A549 (cell line): ENCODE measurements at regions of chr11 and their contacts with region 1.

Region 1: DNA sequence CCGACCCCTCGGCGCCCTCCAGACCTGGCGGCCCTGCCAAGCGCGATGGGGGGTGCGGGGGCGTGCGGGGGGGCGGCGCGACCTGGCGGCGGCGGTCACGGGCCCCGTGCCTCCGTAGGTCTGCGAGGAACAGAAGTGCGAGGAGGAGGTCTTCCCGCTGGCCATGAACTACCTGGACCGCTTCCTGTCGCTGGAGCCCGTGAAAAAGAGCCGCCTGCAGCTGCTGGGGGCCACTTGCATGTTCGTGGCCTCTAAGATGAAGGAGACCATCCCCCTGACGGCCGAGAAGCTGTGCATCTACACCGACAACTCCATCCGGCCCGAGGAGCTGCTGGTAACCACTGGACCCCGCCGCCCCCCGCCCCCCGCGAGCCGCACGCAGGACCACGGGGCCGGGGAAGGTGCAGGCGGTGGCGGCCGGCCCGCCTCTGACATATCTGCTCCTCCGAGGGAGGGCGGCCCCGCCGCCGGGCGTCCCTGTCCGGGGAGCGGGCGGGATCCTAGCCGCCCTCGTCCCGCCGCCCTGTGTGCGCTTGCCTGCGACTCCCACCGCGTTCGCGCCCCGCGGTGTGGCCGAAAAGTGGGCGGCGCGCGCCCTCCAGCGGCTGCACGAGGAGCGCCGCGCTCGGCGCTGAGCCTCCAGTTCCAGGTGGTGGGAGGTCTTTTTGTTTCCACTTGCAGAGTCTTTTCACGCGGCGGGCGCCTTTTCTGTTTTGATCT is 2.1 kb downstream of the CCND1 start:
- DNase-seq: peak; percentile 55 to 80
- ATAC-seq: peak; percentile 13 to 41; a peak in 4 of 6 replicates
- H3K4me3 ChIP-seq: peak overlapping the region; percentile 91
- H3K27ac ChIP-seq: peak overlapping the region; percentile 95 to 96
- H3K4me1 ChIP-seq: peaks cover 45% of the 10 kb centered on the region
- CTCF ChIP-seq: peak; percentile 90
- EP300 ChIP-seq: no peak
- POLR2A ChIP-seq: no peak
- RAD21 ChIP-seq: peak; percentile 74 to 97

Region 2: GRCh38 chr11:69088676-69089146 is 554.4 kb before region 1 on chr11:
- CTCF ChIA-PET with region 1: interaction called, 16 read pairs
- POLR2A ChIA-PET with region 1: no interaction called
- DNase-seq: peak; percentile 83 to 97
- ATAC-seq: peak; percentile 76 to 92
- H3K4me3 ChIP-seq: no peak overlapping the region
- H3K27ac ChIP-seq: no peak overlapping the region
- H3K4me1 ChIP-seq: peaks cover 7% of the 10 kb centered on the region; the same call in 2 of the 3 replicates
- CTCF ChIP-seq: peak; percentile 87
- EP300 ChIP-seq: no peak
- POLR2A ChIP-seq: no peak
- RAD21 ChIP-seq: peak; percentile 90 to 95

Region 3: DNA sequence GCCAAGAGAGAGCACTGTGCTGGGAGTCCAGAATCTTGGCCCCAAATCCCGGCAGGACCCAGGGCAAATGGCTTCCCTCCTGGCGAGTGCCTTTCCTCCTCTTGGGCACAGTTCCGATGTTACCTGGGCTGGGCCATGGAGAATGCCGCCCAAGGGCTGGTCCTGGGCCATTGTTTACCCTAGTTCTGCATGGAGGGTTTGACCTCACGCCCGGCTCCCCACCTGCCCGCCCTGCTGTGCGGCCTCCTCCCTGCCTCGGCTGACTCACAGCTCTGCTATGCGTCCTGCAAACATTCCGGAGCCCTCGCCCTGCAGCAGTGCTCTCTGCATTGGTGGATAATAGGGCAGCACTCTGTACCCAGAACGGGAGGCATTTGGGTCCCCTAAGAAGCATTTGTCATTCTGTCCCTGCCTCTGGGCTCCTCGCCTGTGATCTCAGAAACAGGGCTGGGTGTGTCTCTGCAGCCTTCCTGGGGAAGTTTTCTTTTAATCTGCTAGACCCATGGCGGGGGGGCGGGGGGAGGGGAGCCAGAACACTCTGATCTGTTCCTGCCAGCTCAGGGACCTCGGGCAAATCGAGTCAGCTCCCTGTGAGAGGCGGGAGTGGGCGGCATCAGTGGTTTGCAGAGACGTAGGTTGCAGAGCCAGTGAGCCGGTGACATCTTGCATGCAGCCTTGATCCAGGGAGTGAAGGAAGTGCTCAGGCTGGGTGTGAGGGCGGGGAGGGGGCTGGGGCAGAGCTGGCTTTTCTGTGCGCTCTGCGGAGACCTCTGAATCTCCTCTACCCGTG is 520.2 kb before region 1 on chr11:
- CTCF ChIA-PET with region 1: interaction called, 38 read pairs
- POLR2A ChIA-PET with region 1: interaction called, 7 read pairs
- DNase-seq: peak; percentile 97 to 99
- ATAC-seq: peak; percentile 90 to 96
- H3K4me3 ChIP-seq: peak overlapping the region; percentile 28; the same call in 1 of the 3 replicates
- H3K27ac ChIP-seq: peak overlapping the region; percentile 91 to 98
- H3K4me1 ChIP-seq: peaks cover 37% of the 10 kb centered on the region
- CTCF ChIP-seq: no peak
- EP300 ChIP-seq: peak; percentile 86 to 91; a peak in 4 of 5 replicates
- POLR2A ChIP-seq: peak; percentile 18; the same call in 1 of the 2 replicates
- RAD21 ChIP-seq: peak; percentile 45 to 55; a peak in 4 of 5 replicates

Region 4: DNA sequence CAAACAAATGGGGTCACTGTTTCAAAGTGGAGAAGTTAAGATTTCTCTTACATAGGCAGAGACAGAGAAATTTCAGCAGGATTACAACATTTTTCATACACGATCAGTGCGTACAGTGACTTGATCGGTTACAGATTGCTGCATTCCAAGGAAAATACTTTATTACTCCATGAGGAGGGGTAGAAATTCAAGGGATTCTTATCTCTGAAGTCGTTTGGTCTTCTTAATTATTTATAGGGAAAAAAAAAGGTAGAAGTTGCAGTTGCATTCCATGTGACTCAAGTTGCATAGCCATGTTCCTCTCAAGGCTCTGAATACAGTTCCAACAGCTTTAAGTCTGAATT is 498.0 kb before region 1 on chr11:
- CTCF ChIA-PET with region 1: interaction called, 11 read pairs
- POLR2A ChIA-PET with region 1: no interaction called
- DNase-seq: no peak
- ATAC-seq: no peak
- H3K4me3 ChIP-seq: no peak overlapping the region
- H3K27ac ChIP-seq: no peak overlapping the region
- H3K4me1 ChIP-seq: no peaks in the 10 kb centered on the region
- CTCF ChIP-seq: no peak
- EP300 ChIP-seq: no peak
- POLR2A ChIP-seq: no peak
- RAD21 ChIP-seq: no peak

Region 5: GRCh38 chr11:69296890-69297786 is 345.9 kb before region 1 on chr11:
- CTCF ChIA-PET with region 1: interaction called, 150 read pairs
- POLR2A ChIA-PET with region 1: interaction called, 188 read pairs
- DNase-seq: peak; percentile 93 to 97
- ATAC-seq: peak; percentile 15 to 34
- H3K4me3 ChIP-seq: peak overlapping the region; percentile 69
- H3K27ac ChIP-seq: peak overlapping the region; percentile 93 to 98
- H3K4me1 ChIP-seq: peaks cover 75% of the 10 kb centered on the region
- CTCF ChIP-seq: no peak
- EP300 ChIP-seq: peak; percentile 87 to 95; a peak in 4 of 5 replicates
- POLR2A ChIP-seq: no peak
- RAD21 ChIP-seq: peak; percentile 1 to 66; a peak in 3 of 5 replicates

Region 6: DNA sequence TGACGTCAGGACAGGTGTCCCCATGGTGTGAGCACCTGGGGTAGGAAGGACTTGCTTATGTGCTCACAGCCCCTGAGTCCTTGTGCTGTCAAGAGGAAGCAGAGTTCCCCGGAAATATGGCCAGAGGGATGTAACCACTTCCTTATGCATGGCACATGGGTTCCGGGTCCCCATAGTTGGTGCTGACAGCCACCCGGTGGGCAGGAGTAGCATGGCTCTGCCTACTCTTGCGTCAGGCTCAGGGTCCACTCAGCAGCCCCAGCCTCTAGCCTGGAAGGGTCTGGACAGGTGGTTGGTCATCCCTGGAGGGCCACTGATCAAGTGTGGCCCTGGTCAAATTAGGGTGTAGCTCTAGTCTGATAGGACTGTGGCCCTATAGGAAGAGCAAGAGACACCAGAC is 44.9 kb before region 1 on chr11:
- CTCF ChIA-PET with region 1: interaction called, 11 read pairs
- POLR2A ChIA-PET with region 1: no interaction called
- DNase-seq: peak in 1 of 2 experiments; percentile 47
- ATAC-seq: peak in 1 of 2 experiments; percentile 70; a peak in 4 of 6 replicates
- H3K4me3 ChIP-seq: no peak overlapping the region
- H3K27ac ChIP-seq: no peak overlapping the region
- H3K4me1 ChIP-seq: no peaks in the 10 kb centered on the region
- CTCF ChIP-seq: peak; percentile 18; the same call in 1 of the 3 replicates
- EP300 ChIP-seq: no peak
- POLR2A ChIP-seq: no peak
- RAD21 ChIP-seq: peak; percentile 44 to 50

Region 7: DNA sequence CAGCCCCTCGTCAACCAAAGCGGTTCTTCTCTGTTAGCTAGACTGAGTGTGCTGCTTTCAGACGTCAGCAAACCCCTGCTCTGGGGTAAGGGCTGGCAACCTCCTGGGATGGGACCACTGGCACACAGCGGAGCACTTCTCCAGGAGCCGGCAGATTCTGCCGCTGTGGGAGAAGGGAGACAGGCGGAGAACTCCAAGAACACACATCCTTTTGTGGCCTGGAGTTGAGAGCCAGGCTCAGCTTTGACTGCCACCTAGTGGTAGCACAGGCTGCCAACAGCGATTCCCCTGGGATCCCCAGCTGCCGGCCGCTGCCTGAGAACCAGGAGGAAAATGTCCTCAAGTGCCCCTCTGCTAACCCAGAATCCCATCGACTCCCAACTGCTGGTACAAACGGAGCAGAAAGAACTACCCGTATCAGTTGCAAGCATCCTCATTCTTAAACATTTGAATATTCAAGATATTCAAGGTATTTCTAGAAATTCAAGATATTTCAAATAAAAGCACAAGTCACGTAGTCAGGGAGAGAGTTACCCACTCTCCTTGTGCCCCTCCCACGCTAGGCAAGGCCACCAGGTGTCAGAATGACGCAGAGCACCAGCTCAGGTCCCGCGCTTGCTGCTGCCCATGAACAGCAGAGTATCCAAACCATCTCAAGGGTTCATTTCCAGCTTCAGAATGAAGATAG is 27.2 kb after region 1 on chr11:
- CTCF ChIA-PET with region 1: interaction called, 102 read pairs
- POLR2A ChIA-PET with region 1: interaction called, 4 read pairs
- DNase-seq: peak; percentile 87 to 90
- ATAC-seq: peak; percentile 80 to 81
- H3K4me3 ChIP-seq: no peak overlapping the region
- H3K27ac ChIP-seq: peak overlapping the region; percentile 49 to 72; a peak in 4 of 6 replicates
- H3K4me1 ChIP-seq: peaks cover 24% of the 10 kb centered on the region
- CTCF ChIP-seq: peak; percentile 93
- EP300 ChIP-seq: no peak
- POLR2A ChIP-seq: no peak
- RAD21 ChIP-seq: peak; percentile 92

Region 8: DNA sequence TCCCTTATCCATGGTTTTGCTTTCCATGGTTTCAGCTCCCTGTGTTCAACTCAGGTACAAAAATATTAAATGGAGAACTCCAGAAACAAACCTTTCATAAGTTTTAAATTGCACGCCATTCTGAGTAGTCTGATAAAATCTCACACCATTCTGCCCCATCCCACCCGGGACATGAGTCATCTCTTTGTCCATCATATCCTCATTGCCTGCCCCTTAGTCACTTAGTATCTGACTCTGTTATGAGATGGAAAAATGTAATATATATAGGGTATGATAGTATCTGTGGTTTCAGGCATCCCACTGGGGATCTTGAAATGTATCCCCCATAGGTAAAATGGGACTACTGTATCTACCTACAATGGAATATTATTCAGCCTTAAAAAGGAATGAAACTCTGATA is 211.6 kb after region 1 on chr11:
- CTCF ChIA-PET with region 1: no interaction called
- POLR2A ChIA-PET with region 1: no interaction called
- DNase-seq: peak; percentile 18 to 27
- ATAC-seq: peak; percentile 57 to 74; a peak in 4 of 6 replicates
- H3K4me3 ChIP-seq: no peak overlapping the region
- H3K27ac ChIP-seq: no peak overlapping the region
- H3K4me1 ChIP-seq: no peaks in the 10 kb centered on the region
- CTCF ChIP-seq: no peak
- EP300 ChIP-seq: no peak
- POLR2A ChIP-seq: no peak
- RAD21 ChIP-seq: no peak